ENCODE measurements at regions of chr2 and their contacts with region 1.

Region 1: DNA sequence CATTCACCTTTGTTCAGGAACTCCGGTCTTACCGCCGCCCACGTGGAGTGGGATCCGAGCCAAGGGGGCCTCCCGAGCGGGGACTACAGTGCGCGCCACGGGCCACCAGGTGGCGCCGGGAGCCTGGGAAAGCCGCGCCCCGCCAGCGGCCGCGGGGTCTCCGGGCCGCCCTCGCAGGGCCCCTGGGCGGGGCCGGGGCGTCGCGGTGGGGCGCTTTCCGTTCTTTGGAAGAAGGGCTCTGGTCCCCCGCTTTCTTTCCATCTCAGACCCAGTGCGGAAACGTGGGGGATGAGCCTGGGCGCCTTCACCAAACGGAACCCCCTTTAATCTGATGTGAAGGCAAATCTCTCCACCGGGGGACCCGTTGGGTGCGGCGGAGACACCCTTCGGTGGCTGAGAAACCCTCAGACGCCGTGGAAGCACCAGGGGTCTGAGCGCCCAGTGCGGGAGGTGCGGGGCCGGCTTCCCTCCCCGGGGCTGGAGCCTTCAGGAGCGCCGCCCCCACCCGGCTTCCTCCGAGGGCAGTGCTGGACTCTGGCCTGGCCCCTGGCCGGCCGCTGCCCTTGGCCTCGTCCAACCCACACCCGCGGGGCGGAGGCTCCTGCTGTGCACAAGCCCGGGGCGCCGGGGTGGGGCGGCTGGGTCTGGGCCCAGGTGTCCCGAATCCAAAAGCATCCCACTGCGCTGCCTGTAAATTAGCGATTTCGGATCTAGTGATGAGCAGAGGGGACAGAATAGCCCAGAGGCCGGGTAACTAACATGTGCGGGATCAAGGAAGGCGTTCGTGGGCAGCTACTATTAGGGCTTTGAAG is 44.6 kb downstream of the GORASP2 start:
- H3K4me3 ChIP-seq: peak overlapping the region; percentile 60
- H3K27ac ChIP-seq: peak overlapping the region; percentile 82
- H3K4me1 ChIP-seq: no peaks in the 10 kb centered on the region; the same call in 1 of the 2 replicates
- CTCF ChIP-seq: peak; percentile 94

Region 2: GRCh38 chr2:170815746-170816503 is 157.8 kb before region 1 on chr2:
- CTCF ChIA-PET with region 1: no interaction called
- POLR2A ChIA-PET with region 1: no interaction called
- H3K4me3 ChIP-seq: peak overlapping the region; percentile 55
- H3K27ac ChIP-seq: peak overlapping the region; percentile 84; the same call in 1 of the 2 replicates
- H3K4me1 ChIP-seq: no peaks in the 10 kb centered on the region
- CTCF ChIP-seq: peak; percentile 96

Region 3: GRCh38 chr2:170917219-170917913 is 56.3 kb before region 1 on chr2:
- CTCF ChIA-PET with region 1: no interaction called
- POLR2A ChIA-PET with region 1: no interaction called
- H3K4me3 ChIP-seq: no peak overlapping the region
- H3K27ac ChIP-seq: no peak overlapping the region
- H3K4me1 ChIP-seq: no peaks in the 10 kb centered on the region
- CTCF ChIP-seq: no peak

Region 4: GRCh38 chr2:170984079-170984478 is 10.4 kb after region 1 on chr2:
- CTCF ChIA-PET with region 1: no interaction called
- POLR2A ChIA-PET with region 1: no interaction called
- H3K4me3 ChIP-seq: no peak overlapping the region
- H3K27ac ChIP-seq: no peak overlapping the region
- H3K4me1 ChIP-seq: no peaks in the 10 kb centered on the region
- CTCF ChIP-seq: no peak

Region 5: DNA sequence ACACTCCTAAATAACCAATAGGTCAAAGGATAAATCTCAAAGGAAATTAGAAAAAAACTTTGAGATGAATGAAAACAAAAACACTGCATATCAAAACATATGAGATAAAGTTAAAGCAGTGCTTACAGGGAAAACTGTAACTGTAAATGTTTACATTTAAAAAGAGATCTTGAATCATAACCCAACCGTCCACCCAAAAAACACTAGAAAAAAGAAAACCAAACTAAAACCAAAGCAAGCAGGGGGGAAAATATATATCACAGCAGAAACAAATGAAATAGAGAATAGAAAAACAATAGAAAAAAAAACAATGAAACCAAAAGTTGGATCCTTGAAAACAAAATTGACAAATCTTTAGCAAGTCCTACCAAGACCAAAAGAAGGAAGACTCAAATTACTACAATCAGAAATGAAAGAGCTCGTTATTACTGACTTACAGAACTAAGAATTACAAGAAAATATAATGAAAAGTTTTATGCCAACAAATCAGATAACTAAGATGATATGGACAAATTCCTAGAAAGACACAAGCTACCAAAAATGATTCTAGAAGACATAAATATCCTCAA is 121.4 kb after region 1 on chr2:
- CTCF ChIA-PET with region 1: no interaction called
- POLR2A ChIA-PET with region 1: no interaction called
- H3K4me3 ChIP-seq: no peak overlapping the region
- H3K27ac ChIP-seq: no peak overlapping the region
- H3K4me1 ChIP-seq: no peaks in the 10 kb centered on the region
- CTCF ChIP-seq: no peak

Region 6: DNA sequence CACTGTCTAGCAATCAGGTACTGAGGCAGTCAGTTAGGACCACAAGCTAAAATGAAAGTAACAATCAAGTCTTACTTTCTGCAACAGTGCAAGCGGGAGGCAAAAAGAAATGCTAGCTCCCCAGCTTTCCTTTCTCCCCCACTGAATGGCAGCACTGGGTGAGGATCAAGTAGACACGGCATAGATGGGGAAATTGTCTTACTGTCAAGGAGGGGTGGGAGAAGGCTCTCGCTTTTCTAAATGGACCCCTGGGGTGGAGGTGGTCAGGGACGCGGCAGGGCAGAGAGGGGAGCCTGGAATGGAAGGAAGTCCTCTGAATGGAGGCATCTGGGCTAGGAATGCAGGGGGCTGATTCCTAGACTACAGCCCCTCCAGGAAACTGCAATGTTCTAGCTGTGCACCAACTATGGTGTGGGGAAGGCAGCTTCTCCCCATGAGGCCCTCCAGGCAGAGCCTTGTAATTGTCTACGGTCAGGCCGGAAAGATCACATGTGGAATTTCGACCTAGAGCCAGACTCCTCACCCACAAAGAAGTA is 435.8 kb after region 1 on chr2:
- CTCF ChIA-PET with region 1: interaction called, 11 read pairs
- POLR2A ChIA-PET with region 1: no interaction called
- H3K4me3 ChIP-seq: no peak overlapping the region
- H3K27ac ChIP-seq: no peak overlapping the region
- H3K4me1 ChIP-seq: peaks cover 6% of the 10 kb centered on the region
- CTCF ChIP-seq: no peak

Region 7: GRCh38 chr2:171416009-171416926 is 442.6 kb after region 1 on chr2:
- CTCF ChIA-PET with region 1: interaction called, 18 read pairs
- POLR2A ChIA-PET with region 1: no interaction called
- H3K4me3 ChIP-seq: no peak overlapping the region
- H3K27ac ChIP-seq: no peak overlapping the region
- H3K4me1 ChIP-seq: no peaks in the 10 kb centered on the region
- CTCF ChIP-seq: peak; percentile 77